CD8-positive, alpha-beta T cell (primary cell): ENCODE measurements at regions of chr2 and their contacts with region 1.

Region 1: GRCh38 chr2:177212106-177212890 is at the start of gene HNRNPA3:
- DNase-seq: peak; percentile 99 to 100 (median 100)
- ATAC-seq: peak; percentile 86
- H3K4me3 ChIP-seq: peak within 1 kb of the TSS; percentile 69 to 83
- H3K4me3 Mint-ChIP-seq: peak within 1 kb of the TSS; percentile 88
- H3K27ac ChIP-seq: peak within 1 kb of the TSS; percentile 99 to 100
- H3K27ac Mint-ChIP-seq: peak within 1 kb of the TSS; percentile 100
- H3K4me1 ChIP-seq: peaks cover 50% of the 10 kb centered on the region
- H3K4me1 Mint-ChIP-seq: peaks cover 51% of the 10 kb centered on the region
- H3K27me3 ChIP-seq: no peaks in the 10 kb centered on the region
- H3K27me3 Mint-ChIP-seq: no peaks in the 10 kb centered on the region
- CTCF ChIP-seq: no peak
- total RNA-seq, gene HNRNPA3: 144 to 160 TPM

Region 2: GRCh38 chr2:176956791-176957190 is 255.5 kb before region 1 on chr2:
- CTCF ChIA-PET with region 1: no interaction called
- POLR2A ChIA-PET with region 1: no interaction called
- intact Hi-C with region 1: no loop called
- DNase-seq: no peak
- ATAC-seq: no peak
- H3K4me3 ChIP-seq: no peak overlapping the region
- H3K4me3 Mint-ChIP-seq: no peak overlapping the region
- H3K27ac ChIP-seq: no peak overlapping the region
- H3K27ac Mint-ChIP-seq: no peak overlapping the region
- H3K4me1 ChIP-seq: no peaks in the 10 kb centered on the region
- H3K4me1 Mint-ChIP-seq: no peaks in the 10 kb centered on the region
- H3K27me3 ChIP-seq: no peaks in the 10 kb centered on the region
- H3K27me3 Mint-ChIP-seq: no peaks in the 10 kb centered on the region
- CTCF ChIP-seq: no peak

Region 3: GRCh38 chr2:177201919-177202346 is 10.4 kb before region 1 on chr2:
- CTCF ChIA-PET with region 1: no interaction called
- POLR2A ChIA-PET with region 1: interaction called, 13 read pairs
- intact Hi-C with region 1: no loop called
- DNase-seq: no peak
- ATAC-seq: no peak
- H3K4me3 ChIP-seq: no peak overlapping the region
- H3K4me3 Mint-ChIP-seq: no peak overlapping the region
- H3K27ac ChIP-seq: no peak overlapping the region
- H3K27ac Mint-ChIP-seq: no peak overlapping the region
- H3K4me1 ChIP-seq: no peaks in the 10 kb centered on the region
- H3K4me1 Mint-ChIP-seq: peaks cover 2% of the 10 kb centered on the region
- H3K27me3 ChIP-seq: no peaks in the 10 kb centered on the region
- H3K27me3 Mint-ChIP-seq: no peaks in the 10 kb centered on the region
- CTCF ChIP-seq: no peak

Region 4: GRCh38 chr2:177306550-177306949 is 94.3 kb after region 1 on chr2:
- CTCF ChIA-PET with region 1: no interaction called
- POLR2A ChIA-PET with region 1: no interaction called
- intact Hi-C with region 1: loop called in 1 of 2 experiments (anchors 5 kb)
- DNase-seq: no peak
- ATAC-seq: no peak
- H3K4me3 ChIP-seq: no peak overlapping the region
- H3K4me3 Mint-ChIP-seq: no peak overlapping the region
- H3K27ac ChIP-seq: no peak overlapping the region
- H3K27ac Mint-ChIP-seq: no peak overlapping the region
- H3K4me1 ChIP-seq: peaks cover 17% of the 10 kb centered on the region
- H3K4me1 Mint-ChIP-seq: peaks cover 32% of the 10 kb centered on the region
- H3K27me3 ChIP-seq: no peaks in the 10 kb centered on the region
- H3K27me3 Mint-ChIP-seq: no peaks in the 10 kb centered on the region
- CTCF ChIP-seq: no peak

Region 5: GRCh38 chr2:177552422-177553175 is 340.3 kb after region 1 on chr2:
- CTCF ChIA-PET with region 1: no interaction called
- POLR2A ChIA-PET with region 1: interaction called, 4 read pairs
- intact Hi-C with region 1: loop called (anchors 1 to 5 kb)
- DNase-seq: peak; percentile 83 to 97 (median 91)
- ATAC-seq: peak; percentile 89
- H3K4me3 ChIP-seq: peak overlapping the region; percentile 85 to 99
- H3K4me3 Mint-ChIP-seq: peak overlapping the region; percentile 96
- H3K27ac ChIP-seq: peak overlapping the region; percentile 98 to 100
- H3K27ac Mint-ChIP-seq: peak overlapping the region; percentile 99
- H3K4me1 ChIP-seq: peaks cover 6% of the 10 kb centered on the region
- H3K4me1 Mint-ChIP-seq: peaks cover 12% of the 10 kb centered on the region
- H3K27me3 ChIP-seq: peaks cover 0 to 2% of the 10 kb centered on the region in 2 experiments
- H3K27me3 Mint-ChIP-seq: no peaks in the 10 kb centered on the region
- CTCF ChIP-seq: no peak

Region 6: GRCh38 chr2:178450774-178451525 is 1238.7 kb after region 1 on chr2 and contains the starts of genes PJVK and PRKRA:
- CTCF ChIA-PET with region 1: no interaction called
- POLR2A ChIA-PET with region 1: no interaction called
- intact Hi-C with region 1: loop called in 1 of 2 experiments (anchors 5 kb)
- DNase-seq: peak; percentile 89 to 98 (median 95)
- ATAC-seq: peak; percentile 92
- H3K4me3 ChIP-seq: peak within 1 kb of the TSS; percentile 73 to 93
- H3K4me3 Mint-ChIP-seq: peak within 1 kb of the TSS; percentile 90
- H3K27ac ChIP-seq: peak within 1 kb of the TSS; percentile 76 to 90
- H3K27ac Mint-ChIP-seq: peak within 1 kb of the TSS; percentile 95
- H3K4me1 ChIP-seq: peaks cover 19% of the 10 kb centered on the region
- H3K4me1 Mint-ChIP-seq: peaks cover 34% of the 10 kb centered on the region
- H3K27me3 ChIP-seq: no peaks in the 10 kb centered on the region
- H3K27me3 Mint-ChIP-seq: no peaks in the 10 kb centered on the region
- CTCF ChIP-seq: no peak
- total RNA-seq, gene PJVK: 2.9 to 5.3 TPM
- total RNA-seq, gene PRKRA: 116 to 127 TPM